OCI-LY7 (cell line): ENCODE measurements at regions of chrX and their contacts with region 1.

Region 1: DNA sequence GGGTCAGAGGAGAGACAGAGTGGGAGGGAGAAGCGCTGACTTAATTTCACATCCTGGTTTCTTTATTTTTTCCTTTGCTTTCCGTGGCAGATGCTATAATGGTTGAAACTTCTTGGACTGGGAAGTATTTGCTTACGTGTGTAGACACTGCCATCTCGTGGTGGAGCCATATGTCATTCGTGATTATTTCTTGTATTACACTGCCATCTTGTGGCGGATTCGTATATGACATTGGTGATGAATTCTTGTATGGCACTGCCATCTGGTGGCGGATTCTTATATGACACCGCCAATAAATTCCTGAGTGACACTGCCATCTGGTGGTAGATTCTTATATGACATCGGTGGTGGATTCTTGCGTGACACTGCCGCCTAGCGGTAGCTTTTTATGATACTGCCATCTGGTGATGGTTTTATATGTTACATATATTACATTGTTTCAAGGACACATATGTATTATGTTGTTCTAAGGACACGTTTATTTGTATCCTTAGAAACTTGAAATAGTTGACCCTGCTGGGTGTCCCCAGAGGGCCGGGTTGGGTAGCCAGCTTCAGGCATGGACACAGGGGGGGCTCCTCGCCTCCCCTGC is 37.3 kb upstream of the CLCN4 start:
- DNase-seq: peak; percentile 82
- H3K4me3 ChIP-seq: no peak overlapping the region
- H3K27ac ChIP-seq: no peak overlapping the region
- H3K4me1 ChIP-seq: peaks cover 79% of the 10 kb centered on the region
- CTCF ChIP-seq: peak; percentile 100; the same call in 1 of the 2 replicates

Region 2: GRCh38 chrX:9873952-9874351 is 245.5 kb before region 1 on chrX:
- CTCF ChIA-PET with region 1: no interaction called
- POLR2A ChIA-PET with region 1: no interaction called
- intact Hi-C with region 1: loop called (anchors 1 kb)
- DNase-seq: peak; percentile 45
- H3K4me3 ChIP-seq: no peak overlapping the region
- H3K27ac ChIP-seq: no peak overlapping the region
- H3K4me1 ChIP-seq: no peaks in the 10 kb centered on the region
- CTCF ChIP-seq: peak; percentile 74

Region 3: GRCh38 chrX:9995855-9996339 is 123.6 kb before region 1 on chrX:
- CTCF ChIA-PET with region 1: interaction called, 5 read pairs
- POLR2A ChIA-PET with region 1: interaction called, 5 read pairs
- intact Hi-C with region 1: loop called (anchors 1 kb)
- DNase-seq: peak; percentile 72
- H3K4me3 ChIP-seq: no peak overlapping the region
- H3K27ac ChIP-seq: no peak overlapping the region
- H3K4me1 ChIP-seq: no peaks in the 10 kb centered on the region
- CTCF ChIP-seq: peak; percentile 92

Region 4: GRCh38 chrX:10077425-10078188 is 41.9 kb before region 1 on chrX:
- CTCF ChIA-PET with region 1: interaction called, 7 read pairs
- POLR2A ChIA-PET with region 1: interaction called, 5 read pairs
- intact Hi-C with region 1: loop called (anchors 2 kb)
- DNase-seq: peak; percentile 50
- H3K4me3 ChIP-seq: no peak overlapping the region
- H3K27ac ChIP-seq: no peak overlapping the region
- H3K4me1 ChIP-seq: peaks cover 34% of the 10 kb centered on the region
- CTCF ChIP-seq: peak; percentile 54

Region 5: DNA sequence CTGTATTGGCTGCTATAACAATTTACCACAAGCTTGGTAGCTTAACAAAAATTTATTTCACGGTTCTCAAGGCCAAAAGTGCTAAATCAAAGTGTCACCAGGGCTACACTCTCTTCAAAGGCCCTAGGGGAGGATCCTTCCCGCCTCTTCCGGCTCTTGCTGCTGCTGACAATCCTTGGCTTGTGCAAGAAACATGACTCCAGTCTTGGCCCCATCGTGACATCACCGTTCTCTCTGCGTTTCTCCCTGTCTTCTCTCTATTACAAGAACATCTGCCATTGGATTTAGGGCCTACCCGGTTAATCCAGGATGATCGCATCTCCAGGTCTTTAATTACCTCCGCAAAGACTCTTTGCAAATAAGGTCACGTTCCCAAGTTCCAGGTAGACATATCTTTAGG is 26.9 kb after region 1 on chrX:
- CTCF ChIA-PET with region 1: no interaction called
- POLR2A ChIA-PET with region 1: no interaction called
- intact Hi-C with region 1: no loop called
- DNase-seq: no peak
- H3K4me3 ChIP-seq: no peak overlapping the region
- H3K27ac ChIP-seq: no peak overlapping the region
- H3K4me1 ChIP-seq: peaks cover 15% of the 10 kb centered on the region
- CTCF ChIP-seq: no peak